Mammary epithelial cell (primary cell): ENCODE measurements at regions of chr4 and their contacts with region 1.

Region 1: GRCh38 chr4:38663801-38664705 is at the start of gene KLF3:
- DNase-seq: peak; percentile 89
- H3K4me3 ChIP-seq: peak within 1 kb of the TSS; percentile 73 to 92 (median 87)
- H3K27ac ChIP-seq: peak within 1 kb of the TSS; percentile 96
- H3K4me1 ChIP-seq: peaks cover 19% of the 10 kb centered on the region
- H3K27me3 ChIP-seq: no peaks in the 10 kb centered on the region
- CTCF ChIP-seq: no peak
- total RNA-seq, gene KLF3: 24.2 to 41.3 TPM

Region 2: GRCh38 chr4:37762294-37762990 is 901.6 kb before region 1 on chr4:
- CTCF ChIA-PET with region 1: no interaction called
- dilution Hi-C with region 1: no loop called
- in situ Hi-C with region 1: no loop called
- intact Hi-C with region 1: loop called (anchors 5 kb)
- DNase-seq: peak; percentile 79
- H3K4me3 ChIP-seq: no peak overlapping the region
- H3K27ac ChIP-seq: peak overlapping the region; percentile 61
- H3K4me1 ChIP-seq: peaks cover 13% of the 10 kb centered on the region
- H3K27me3 ChIP-seq: no peaks in the 10 kb centered on the region
- CTCF ChIP-seq: no peak

Region 3: DNA sequence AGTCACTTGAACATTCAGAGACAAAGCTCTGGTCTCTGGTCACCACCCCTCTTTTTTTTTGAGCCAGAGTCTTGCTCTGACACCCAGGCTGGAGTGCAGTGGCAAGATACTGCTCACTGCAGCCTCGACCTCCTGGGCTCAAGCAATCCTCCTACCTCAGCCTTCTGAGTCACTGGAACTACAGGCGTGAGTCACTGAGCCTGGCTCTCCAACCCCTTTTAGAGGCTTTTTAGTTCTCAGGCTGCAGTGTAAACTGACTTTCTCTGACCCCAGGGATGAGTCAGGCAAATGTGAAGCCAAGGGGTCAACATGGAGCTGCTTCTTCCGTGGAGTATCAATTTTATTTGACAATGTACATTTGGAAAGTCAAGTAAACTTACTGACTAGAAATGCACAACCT is 474.6 kb before region 1 on chr4:
- CTCF ChIA-PET with region 1: no interaction called
- dilution Hi-C with region 1: no loop called
- in situ Hi-C with region 1: loop called in 1 of 2 experiments (anchors 5 kb)
- intact Hi-C with region 1: loop called (anchors 1 kb)
- DNase-seq: peak; percentile 92
- H3K4me3 ChIP-seq: no peak overlapping the region
- H3K27ac ChIP-seq: peak overlapping the region; percentile 92
- H3K4me1 ChIP-seq: peaks cover 44% of the 10 kb centered on the region
- H3K27me3 ChIP-seq: no peaks in the 10 kb centered on the region
- CTCF ChIP-seq: no peak

Region 4: GRCh38 chr4:38562751-38563198 is 101.3 kb before region 1 on chr4:
- CTCF ChIA-PET with region 1: no interaction called
- dilution Hi-C with region 1: loop called (anchors 10 kb)
- in situ Hi-C with region 1: no loop called
- intact Hi-C with region 1: loop called (anchors 2 kb)
- DNase-seq: peak; percentile 39
- H3K4me3 ChIP-seq: no peak overlapping the region
- H3K27ac ChIP-seq: no peak overlapping the region
- H3K4me1 ChIP-seq: peaks cover 38% of the 10 kb centered on the region
- H3K27me3 ChIP-seq: no peaks in the 10 kb centered on the region
- CTCF ChIP-seq: no peak

Region 5: DNA sequence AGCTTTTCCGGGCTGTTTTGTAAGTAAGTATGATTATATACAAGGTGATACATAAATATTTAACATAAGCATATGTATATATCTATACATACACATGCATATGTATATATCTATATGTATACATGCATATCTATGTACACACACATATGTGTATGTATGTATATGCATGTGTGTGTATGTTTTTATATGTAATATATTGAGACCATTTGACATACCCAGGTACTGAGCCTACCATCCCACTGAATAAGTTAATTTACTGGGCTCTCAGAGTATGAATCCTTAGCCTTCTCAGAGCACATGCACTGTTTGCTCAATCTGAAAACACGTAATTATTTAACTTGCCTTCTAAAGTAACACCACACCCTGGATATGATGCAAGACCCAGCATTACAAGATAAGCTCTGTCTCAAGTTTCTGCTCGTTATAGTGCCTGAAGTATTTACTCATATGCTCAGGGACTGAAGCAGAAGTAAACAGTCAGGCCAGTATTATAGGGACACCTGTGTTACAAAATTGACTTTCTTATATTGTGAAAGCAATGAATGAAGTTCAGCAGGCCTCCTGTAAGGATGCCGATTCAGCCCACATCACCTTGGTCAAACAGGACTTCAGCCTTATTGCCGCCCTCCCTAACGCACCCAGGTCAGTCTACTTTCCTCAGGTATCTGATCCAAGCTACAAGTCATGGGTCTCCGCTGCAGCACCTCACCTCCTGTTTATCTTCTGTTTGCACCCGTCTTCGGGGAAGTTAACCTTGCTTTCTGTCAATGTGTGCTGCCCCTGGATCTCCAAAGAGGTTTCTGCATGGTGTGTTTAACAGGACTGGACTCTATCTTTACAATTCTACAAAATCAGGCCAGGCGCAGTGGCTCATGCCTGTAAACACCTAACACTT is 43.0 kb before region 1 on chr4:
- CTCF ChIA-PET with region 1: no interaction called
- dilution Hi-C with region 1: no loop called
- in situ Hi-C with region 1: no loop called
- intact Hi-C with region 1: loop called (anchors 2 kb)
- DNase-seq: peak; percentile 95
- H3K4me3 ChIP-seq: no peak overlapping the region
- H3K27ac ChIP-seq: peak overlapping the region; percentile 25
- H3K4me1 ChIP-seq: peaks cover 15% of the 10 kb centered on the region
- H3K27me3 ChIP-seq: no peaks in the 10 kb centered on the region
- CTCF ChIP-seq: no peak

Region 6: DNA sequence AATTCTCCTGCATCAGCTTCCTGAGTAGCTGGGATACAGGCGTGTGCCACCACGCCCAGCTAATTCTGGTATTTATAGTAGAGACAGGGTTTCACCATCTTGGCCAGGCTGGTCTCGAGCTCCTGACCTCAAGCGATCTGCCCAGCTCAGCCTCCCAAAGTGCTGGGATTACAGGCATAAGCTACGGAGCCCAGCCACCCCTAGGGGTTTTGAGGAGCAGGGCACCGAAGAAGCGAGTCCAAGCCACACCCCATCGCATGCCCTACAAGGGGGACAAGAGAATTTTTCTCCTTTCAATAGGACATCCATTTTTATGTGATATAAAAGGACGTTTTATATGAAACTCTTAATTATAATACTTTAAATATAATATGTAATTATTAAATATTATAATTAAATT is 13.9 kb before region 1 on chr4:
- CTCF ChIA-PET with region 1: no interaction called
- dilution Hi-C with region 1: no loop called
- in situ Hi-C with region 1: no loop called
- intact Hi-C with region 1: loop called (anchors 1 kb)
- DNase-seq: no peak
- H3K4me3 ChIP-seq: no peak overlapping the region
- H3K27ac ChIP-seq: no peak overlapping the region
- H3K4me1 ChIP-seq: peaks cover 5% of the 10 kb centered on the region
- H3K27me3 ChIP-seq: no peaks in the 10 kb centered on the region
- CTCF ChIP-seq: no peak